SK-N-SH (cell line): ENCODE measurements at regions of chr17 and their contacts with region 1.

Region 1: GRCh38 chr17:45823598-45823997 is 21.1 kb upstream of the SPPL2C start:
- DNase-seq: no peak
- H3K4me3 ChIP-seq: no peak overlapping the region
- H3K27ac ChIP-seq: no peak overlapping the region
- H3K4me1 ChIP-seq: peaks cover 0 to 55% of the 10 kb centered on the region in 2 experiments; a peak in 3 of 4 replicates
- H3K27me3 ChIP-seq: no peaks in the 10 kb centered on the region
- CTCF ChIP-seq: no peak
- EP300 ChIP-seq: no peak
- RAD21 ChIP-seq: no peak

Region 2: GRCh38 chr17:45653616-45654015 is 170.0 kb before region 1 on chr17:
- CTCF ChIA-PET with region 1: no interaction called
- POLR2A ChIA-PET with region 1: no interaction called
- DNase-seq: no peak
- H3K4me3 ChIP-seq: no peak overlapping the region
- H3K27ac ChIP-seq: no peak overlapping the region
- H3K4me1 ChIP-seq: no peaks in the 10 kb centered on the region
- H3K27me3 ChIP-seq: peaks cover 5% of the 10 kb centered on the region; the same call in 1 of the 2 replicates
- CTCF ChIP-seq: no peak
- EP300 ChIP-seq: no peak
- RAD21 ChIP-seq: no peak

Region 3: DNA sequence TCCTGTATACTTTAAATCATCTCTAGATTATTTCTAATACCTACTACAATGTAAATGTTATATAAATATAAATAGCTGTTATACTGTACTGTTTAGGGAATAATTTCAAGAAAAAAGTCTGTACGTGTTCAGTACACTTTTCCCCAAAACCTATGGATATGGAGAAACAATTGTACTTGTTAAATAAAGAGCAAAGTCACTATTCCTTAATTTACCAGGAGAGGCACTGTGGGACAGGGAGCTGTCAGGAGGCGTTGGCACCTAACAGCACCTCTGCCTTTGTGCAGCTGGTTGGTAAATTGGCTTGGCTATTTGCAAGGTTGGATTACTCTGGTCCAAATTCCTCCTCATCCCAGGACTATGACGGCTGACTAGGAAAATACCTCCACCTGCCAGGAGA is 11.5 kb before region 1 on chr17:
- CTCF ChIA-PET with region 1: interaction called, 13 read pairs
- POLR2A ChIA-PET with region 1: interaction called, 4 read pairs
- DNase-seq: no peak
- H3K4me3 ChIP-seq: no peak overlapping the region
- H3K27ac ChIP-seq: no peak overlapping the region
- H3K4me1 ChIP-seq: peaks cover 0 to 34% of the 10 kb centered on the region in 2 experiments; a peak in 1 of 4 replicates
- H3K27me3 ChIP-seq: 0 out of 2 replicates have a peak, but pooled peaks cover 2% of the 10 kb centered on the region
- CTCF ChIP-seq: no peak
- EP300 ChIP-seq: no peak
- RAD21 ChIP-seq: no peak